Heart left ventricle (tissue), 16 donors: ENCODE measurements at regions of chr11 and their contacts with region 1.

Region 1: GRCh38 chr11:69918938-69919650 is 99.9 kb upstream of the FGF3 start:
- DNase-seq: peak; percentile 79 to 92 (median 80)
- ATAC-seq: peak; percentile 47 to 78 (median 66)
- H3K4me3 ChIP-seq: peak overlapping the region in 3 of 12 donors; percentile 9 to 19 (median 14)
- H3K27ac ChIP-seq: peak overlapping the region in 10 of 12 donors; percentile 39 to 80 (median 64)
- H3K4me1 ChIP-seq: peaks cover 3 to 36% (median 28%) of the 10 kb centered on the region in 12 donors
- H3K27me3 ChIP-seq: peaks cover 0 to 17% (median 0%) of the 10 kb centered on the region in 9 donors
- CTCF ChIP-seq: peak; percentile 89 to 98 (median 96)
- POLR2A ChIP-seq: no peak

Region 2: DNA sequence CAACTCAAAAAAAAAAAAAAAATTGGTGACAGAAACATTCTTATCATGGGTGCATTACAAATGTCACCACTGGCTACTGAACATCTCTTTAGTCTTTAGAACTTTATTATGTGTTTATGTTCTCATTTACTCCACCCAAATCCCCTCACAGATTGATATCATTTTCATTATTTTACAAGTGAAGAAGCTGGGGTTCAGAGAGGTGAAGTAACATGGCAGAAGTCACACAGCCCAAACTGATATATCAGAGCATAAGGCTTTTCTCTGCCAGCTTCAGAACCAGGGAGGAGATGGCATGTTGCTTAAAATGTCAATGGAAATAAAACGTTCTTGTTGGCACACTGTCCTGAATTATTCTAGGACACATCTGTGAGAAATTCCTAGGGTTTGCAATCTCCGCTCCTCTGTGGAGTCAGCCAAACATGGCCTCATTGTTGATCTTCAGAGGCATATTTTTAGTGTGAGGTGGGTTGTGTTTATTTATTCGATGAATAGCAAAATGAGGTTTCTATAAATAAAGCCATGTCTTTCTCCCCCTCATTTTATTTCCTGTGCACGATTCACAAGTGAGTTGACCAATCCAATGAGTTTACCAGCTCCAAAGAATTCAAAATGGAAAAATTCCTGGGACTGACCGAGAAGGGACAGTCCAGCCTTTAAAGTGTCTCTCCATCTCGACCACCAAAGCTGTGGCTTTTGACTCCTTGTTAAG is 86.2 kb after region 1 on chr11:
- intact Hi-C with region 1: no loop called
- DNase-seq: no peak
- ATAC-seq: peak in 2 of 4 donors; percentile 63 to 70
- H3K4me3 ChIP-seq: no peak overlapping the region
- H3K27ac ChIP-seq: peak overlapping the region in 4 of 12 donors; percentile 12 to 65 (median 45)
- H3K4me1 ChIP-seq: peaks cover 0 to 27% (median 1%) of the 10 kb centered on the region in 12 donors
- H3K27me3 ChIP-seq: no peaks in the 10 kb centered on the region
- CTCF ChIP-seq: no peak
- POLR2A ChIP-seq: no peak

Region 3: GRCh38 chr11:70082829-70083228 is 163.7 kb after region 1 on chr11:
- intact Hi-C with region 1: loop called in 9 of 10 experiments (anchors 5 to 10 kb)
- DNase-seq: peak in 1 of 5 donors; percentile 10
- ATAC-seq: no peak
- H3K4me3 ChIP-seq: no peak overlapping the region
- H3K27ac ChIP-seq: peak overlapping the region in 1 of 12 donors; percentile 34
- H3K4me1 ChIP-seq: peaks cover 0 to 24% (median 2%) of the 10 kb centered on the region in 12 donors
- H3K27me3 ChIP-seq: peaks cover 0 to 19% (median 4%) of the 10 kb centered on the region in 9 donors
- CTCF ChIP-seq: peak in 4 of 12 donors; percentile 11 to 30 (median 18)
- POLR2A ChIP-seq: no peak

Region 4: GRCh38 chr11:70135625-70136059 is 216.5 kb after region 1 on chr11:
- intact Hi-C with region 1: loop called in 1 of 10 experiments (anchors 5 kb)
- DNase-seq: peak in 1 of 5 donors; percentile 47
- ATAC-seq: peak in 3 of 4 donors; percentile 28 to 79 (median 65)
- H3K4me3 ChIP-seq: peak overlapping the region in 6 of 12 donors; percentile 4 to 39 (median 22)
- H3K27ac ChIP-seq: peak overlapping the region in 6 of 12 donors; percentile 4 to 67 (median 36)
- H3K4me1 ChIP-seq: peaks cover 0 to 21% (median 4%) of the 10 kb centered on the region in 12 donors
- H3K27me3 ChIP-seq: no peaks in the 10 kb centered on the region
- CTCF ChIP-seq: no peak
- POLR2A ChIP-seq: no peak